MCF 10A (cell line): ENCODE measurements at regions of chr20 and their contacts with region 1.

Region 1: GRCh38 chr20:6566821-6567220 is 200.7 kb upstream of the BMP2 start:
- DNase-seq: peak; percentile 94
- H3K4me3 Mint-ChIP-seq: no peak overlapping the region
- H3K27ac Mint-ChIP-seq: no peak overlapping the region
- H3K4me1 Mint-ChIP-seq: peaks cover 18% of the 10 kb centered on the region
- H3K27me3 Mint-ChIP-seq: no peaks in the 10 kb centered on the region
- CTCF ChIP-seq: no peak

Region 2: DNA sequence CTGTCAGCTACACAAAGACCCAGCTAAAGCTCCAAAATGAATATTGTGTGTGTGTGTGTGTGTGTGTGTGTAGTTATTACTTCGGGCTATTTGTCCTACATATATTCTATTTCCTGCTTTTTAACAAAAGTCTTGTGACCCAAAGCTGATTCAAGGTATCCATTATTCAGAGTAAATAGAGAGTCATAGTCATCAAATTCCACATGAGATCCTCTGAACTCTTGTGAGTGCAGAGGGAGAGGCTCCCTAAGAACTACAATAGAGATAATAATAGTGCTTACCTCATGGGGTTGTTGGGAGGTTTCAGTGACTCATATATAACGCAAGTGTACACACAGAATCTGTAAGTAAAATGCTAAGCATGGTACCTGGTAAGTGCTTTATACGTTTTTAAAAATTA is 912.3 kb before region 1 on chr20:
- CTCF ChIA-PET with region 1: no interaction called
- POLR2A ChIA-PET with region 1: no interaction called
- intact Hi-C with region 1: no loop called
- DNase-seq: peak; percentile 92
- H3K4me3 Mint-ChIP-seq: no peak overlapping the region
- H3K27ac Mint-ChIP-seq: peak overlapping the region; percentile 96
- H3K4me1 Mint-ChIP-seq: peaks cover 47% of the 10 kb centered on the region
- H3K27me3 Mint-ChIP-seq: no peaks in the 10 kb centered on the region
- CTCF ChIP-seq: no peak

Region 3: GRCh38 chr20:6473197-6473596 is 93.6 kb before region 1 on chr20:
- CTCF ChIA-PET with region 1: interaction called, 4 read pairs
- POLR2A ChIA-PET with region 1: interaction called, 6 read pairs
- intact Hi-C with region 1: loop called (anchors 5 kb)
- DNase-seq: peak; percentile 86
- H3K4me3 Mint-ChIP-seq: no peak overlapping the region
- H3K27ac Mint-ChIP-seq: no peak overlapping the region
- H3K4me1 Mint-ChIP-seq: peaks cover 13% of the 10 kb centered on the region
- H3K27me3 Mint-ChIP-seq: no peaks in the 10 kb centered on the region
- CTCF ChIP-seq: no peak